RWPE1 (cell line): ENCODE measurements at regions of chr1 and their contacts with region 1.

Region 1: GRCh38 chr1:23779826-23780371 is 1.7 kb downstream of the PITHD1 start:
- DNase-seq: peak; percentile 64
- H3K27ac ChIP-seq: no peak overlapping the region
- CTCF ChIP-seq: no peak

Region 2: GRCh38 chr1:23800400-23801337 is 20.8 kb after region 1 on chr1 and contains the start of gene GALE:
- CTCF ChIA-PET with region 1: interaction called, 3 read pairs
- POLR2A ChIA-PET with region 1: interaction called, 15 read pairs
- DNase-seq: peak; percentile 93
- H3K27ac ChIP-seq: peak within 1 kb of the TSS; percentile 98
- CTCF ChIP-seq: no peak

Region 3: GRCh38 chr1:23908493-23909341 is 128.8 kb after region 1 on chr1:
- CTCF ChIA-PET with region 1: no interaction called
- POLR2A ChIA-PET with region 1: no interaction called
- DNase-seq: no peak
- H3K27ac ChIP-seq: no peak overlapping the region
- CTCF ChIP-seq: no peak